ENCODE measurements at regions of chr9 and their contacts with region 1.

Region 1: GRCh38 chr9:36436909-36437308 is 36.8 kb upstream of the RNF38 start:
- DNase-seq: peak; percentile 25 to 73 (median 68)
- ATAC-seq: peak in 3 of 4 donors; percentile 65 to 82 (median 80)
- H3K4me3 ChIP-seq: no peak overlapping the region
- H3K27ac ChIP-seq: no peak overlapping the region
- H3K4me1 ChIP-seq: peaks cover 0 to 30% (median 10%) of the 10 kb centered on the region in 12 donors
- H3K27me3 ChIP-seq: no peaks in the 10 kb centered on the region
- CTCF ChIP-seq: no peak
- POLR2A ChIP-seq: no peak

Region 2: GRCh38 chr9:36127652-36128244 is 309.2 kb before region 1 on chr9:
- intact Hi-C with region 1: no loop called
- DNase-seq: no peak
- ATAC-seq: peak in 3 of 4 donors; percentile 35 to 73 (median 65)
- H3K4me3 ChIP-seq: no peak overlapping the region
- H3K27ac ChIP-seq: peak overlapping the region in 1 of 12 donors; percentile 69
- H3K4me1 ChIP-seq: peaks cover 0 to 39% (median 0%) of the 10 kb centered on the region in 12 donors
- H3K27me3 ChIP-seq: no peaks in the 10 kb centered on the region
- CTCF ChIP-seq: no peak
- POLR2A ChIP-seq: no peak

Region 3: DNA sequence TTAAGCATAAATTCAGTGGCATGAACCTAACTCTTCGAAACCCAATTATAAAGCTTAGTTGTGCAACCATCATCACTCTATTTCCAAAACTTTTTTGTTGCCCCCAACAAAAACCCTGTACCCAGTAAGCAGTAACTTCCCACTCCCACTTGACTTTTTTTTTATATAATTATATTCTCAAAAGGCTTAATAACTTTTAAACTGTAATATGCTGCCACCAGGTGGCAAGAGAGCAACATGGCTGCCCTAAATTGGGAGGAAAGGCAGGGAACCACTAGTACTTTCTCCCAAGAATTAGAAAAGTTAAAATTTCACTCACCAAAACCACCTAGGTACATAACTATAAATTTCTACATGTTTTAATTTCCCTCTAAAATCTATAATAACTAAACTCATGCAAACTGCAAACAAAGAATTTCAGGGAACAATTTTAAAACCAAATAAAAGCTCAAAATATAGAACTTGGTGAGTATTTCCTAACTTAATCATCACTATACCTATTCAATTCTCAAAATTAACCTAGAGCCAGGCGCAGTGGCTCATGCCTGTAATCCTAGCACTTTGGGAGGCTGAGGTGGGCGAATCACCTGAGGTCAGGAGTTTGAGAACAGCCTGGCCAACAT is 13.3 kb after region 1 on chr9:
- intact Hi-C with region 1: loop called in 1 of 10 experiments (anchors 2 kb)
- DNase-seq: no peak
- ATAC-seq: no peak
- H3K4me3 ChIP-seq: no peak overlapping the region
- H3K27ac ChIP-seq: no peak overlapping the region
- H3K4me1 ChIP-seq: peaks cover 0 to 42% (median 14%) of the 10 kb centered on the region in 12 donors
- H3K27me3 ChIP-seq: no peaks in the 10 kb centered on the region
- CTCF ChIP-seq: peak; percentile 50 to 80 (median 71)
- POLR2A ChIP-seq: no peak

Region 4: GRCh38 chr9:36457836-36458429 is 21.0 kb after region 1 on chr9:
- intact Hi-C with region 1: loop called in 2 of 10 experiments (anchors 2 kb)
- DNase-seq: no peak
- ATAC-seq: no peak
- H3K4me3 ChIP-seq: no peak overlapping the region
- H3K27ac ChIP-seq: peak overlapping the region in 1 of 12 donors; percentile 32
- H3K4me1 ChIP-seq: peaks cover 0 to 61% (median 17%) of the 10 kb centered on the region in 12 donors
- H3K27me3 ChIP-seq: no peaks in the 10 kb centered on the region
- CTCF ChIP-seq: no peak
- POLR2A ChIP-seq: no peak